K562 (cell line): ENCODE measurements at regions of chr6 and their contacts with region 1.

Region 1: GRCh38 chr6:26234421-26235296 is 130.3 kb upstream of the BTN3A2 start:
- DNase-seq: peak; percentile 71 to 93 (median 83)
- ATAC-seq: peak; percentile 89
- H3K4me3 ChIP-seq: peak overlapping the region; percentile 40
- H3K27ac ChIP-seq: peak overlapping the region; percentile 73
- H3K4me1 ChIP-seq: peaks cover 16 to 20% of the 10 kb centered on the region in 2 experiments; a peak in 4 of 5 replicates
- H3K27me3 ChIP-seq: no peaks in the 10 kb centered on the region
- CTCF ChIP-seq: no peak
- EP300 ChIP-seq: no peak; the same call in 1 of the 2 replicates
- POLR2A ChIP-seq: peak; percentile 99
- RAD21 ChIP-seq: no peak; a peak in 1 of 4 replicates

Region 2: DNA sequence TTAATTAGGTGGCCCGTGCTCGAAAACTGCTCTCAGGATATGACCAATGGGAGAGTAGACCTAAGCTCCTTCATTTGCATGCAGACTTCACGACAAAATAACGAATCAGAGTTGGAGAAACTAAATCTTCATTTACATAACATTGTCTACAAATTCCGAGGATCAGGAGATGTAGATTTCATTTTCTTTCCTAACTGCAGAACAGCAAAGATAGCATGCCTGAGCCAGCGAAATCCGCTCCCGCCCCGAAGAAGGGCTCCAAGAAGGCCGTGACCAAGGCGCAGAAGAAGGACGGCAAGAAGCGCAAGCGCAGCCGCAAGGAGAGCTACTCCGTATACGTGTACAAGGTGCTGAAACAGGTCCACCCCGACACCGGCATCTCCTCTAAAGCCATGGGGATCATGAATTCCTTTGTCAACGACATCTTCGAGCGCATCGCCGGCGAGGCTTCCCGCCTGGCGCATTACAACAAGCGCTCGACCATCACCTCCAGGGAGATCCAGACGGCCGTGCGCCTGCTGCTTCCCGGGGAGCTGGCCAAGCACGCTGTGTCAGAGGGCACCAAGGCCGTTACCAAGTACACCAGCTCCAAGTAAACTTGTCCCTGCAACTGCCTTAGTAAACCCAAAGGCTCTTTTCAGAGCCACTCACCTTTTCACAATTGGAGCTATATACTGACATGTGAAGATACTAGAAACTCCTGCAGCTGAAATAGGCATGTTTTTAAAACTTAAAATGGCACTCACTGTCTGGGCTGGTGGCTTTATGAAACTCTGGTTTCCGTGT is 50.9 kb before region 1 on chr6:
- CTCF ChIA-PET with region 1: no interaction called
- POLR2A ChIA-PET with region 1: interaction called, 11 read pairs
- in situ Hi-C with region 1: no loop called
- intact Hi-C with region 1: no loop called
- DNase-seq: no peak
- ATAC-seq: no peak
- H3K4me3 ChIP-seq: no peak overlapping the region
- H3K27ac ChIP-seq: no peak overlapping the region
- H3K4me1 ChIP-seq: peaks cover 0 to 18% of the 10 kb centered on the region in 2 experiments; a peak in 4 of 5 replicates
- H3K27me3 ChIP-seq: no peaks in the 10 kb centered on the region
- CTCF ChIP-seq: no peak
- EP300 ChIP-seq: no peak
- POLR2A ChIP-seq: no peak
- RAD21 ChIP-seq: no peak

Region 3: DNA sequence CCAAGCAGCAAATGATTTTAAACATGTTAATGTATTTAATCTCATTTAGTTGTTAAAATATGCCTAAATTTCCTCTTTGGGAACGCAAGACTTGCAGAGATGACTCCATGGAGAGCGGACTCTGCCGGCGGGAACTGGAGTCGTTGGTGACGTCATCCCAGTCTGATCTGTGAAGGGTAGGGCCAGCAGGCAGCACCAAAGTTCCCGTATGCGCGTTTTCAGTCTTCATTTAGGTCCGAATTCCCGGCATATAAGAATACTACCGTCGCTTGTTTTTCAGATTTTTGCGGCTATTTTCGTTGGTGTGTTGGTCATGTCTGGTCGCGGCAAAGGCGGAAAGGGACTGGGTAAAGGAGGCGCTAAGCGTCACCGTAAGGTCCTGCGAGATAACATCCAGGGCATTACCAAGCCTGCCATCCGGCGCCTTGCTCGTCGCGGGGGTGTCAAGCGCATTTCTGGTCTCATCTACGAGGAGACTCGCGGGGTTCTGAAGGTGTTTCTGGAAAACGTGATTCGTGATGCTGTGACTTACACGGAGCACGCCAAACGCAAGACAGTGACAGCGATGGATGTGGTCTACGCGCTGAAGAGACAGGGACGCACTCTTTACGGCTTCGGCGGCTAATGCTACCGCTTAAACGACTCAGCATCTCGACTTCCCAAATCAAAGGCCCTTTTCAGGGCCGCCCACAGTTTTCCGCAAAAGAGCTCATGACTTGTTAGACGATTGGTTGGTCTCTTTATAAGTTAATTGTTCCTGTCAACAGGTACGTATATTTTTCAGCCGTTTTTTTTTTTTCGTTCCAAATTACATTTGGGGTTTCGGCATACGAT is 30.1 kb before region 1 on chr6:
- CTCF ChIA-PET with region 1: no interaction called
- POLR2A ChIA-PET with region 1: interaction called, 47 read pairs
- in situ Hi-C with region 1: no loop called
- intact Hi-C with region 1: no loop called
- DNase-seq: peak; percentile 85 to 99 (median 92)
- ATAC-seq: peak; percentile 67
- H3K4me3 ChIP-seq: peak overlapping the region; percentile 57
- H3K27ac ChIP-seq: peak overlapping the region; percentile 99
- H3K4me1 ChIP-seq: peaks cover 9 to 21% of the 10 kb centered on the region in 2 experiments; a peak in 4 of 5 replicates
- H3K27me3 ChIP-seq: no peaks in the 10 kb centered on the region
- CTCF ChIP-seq: peak in 2 of 3 experiments; percentile 67 to 70; a peak in 5 of 6 replicates
- EP300 ChIP-seq: peak; percentile 95
- POLR2A ChIP-seq: peak; percentile 100
- RAD21 ChIP-seq: peak in 1 of 2 experiments; percentile 29; a peak in 2 of 4 replicates

Region 4: DNA sequence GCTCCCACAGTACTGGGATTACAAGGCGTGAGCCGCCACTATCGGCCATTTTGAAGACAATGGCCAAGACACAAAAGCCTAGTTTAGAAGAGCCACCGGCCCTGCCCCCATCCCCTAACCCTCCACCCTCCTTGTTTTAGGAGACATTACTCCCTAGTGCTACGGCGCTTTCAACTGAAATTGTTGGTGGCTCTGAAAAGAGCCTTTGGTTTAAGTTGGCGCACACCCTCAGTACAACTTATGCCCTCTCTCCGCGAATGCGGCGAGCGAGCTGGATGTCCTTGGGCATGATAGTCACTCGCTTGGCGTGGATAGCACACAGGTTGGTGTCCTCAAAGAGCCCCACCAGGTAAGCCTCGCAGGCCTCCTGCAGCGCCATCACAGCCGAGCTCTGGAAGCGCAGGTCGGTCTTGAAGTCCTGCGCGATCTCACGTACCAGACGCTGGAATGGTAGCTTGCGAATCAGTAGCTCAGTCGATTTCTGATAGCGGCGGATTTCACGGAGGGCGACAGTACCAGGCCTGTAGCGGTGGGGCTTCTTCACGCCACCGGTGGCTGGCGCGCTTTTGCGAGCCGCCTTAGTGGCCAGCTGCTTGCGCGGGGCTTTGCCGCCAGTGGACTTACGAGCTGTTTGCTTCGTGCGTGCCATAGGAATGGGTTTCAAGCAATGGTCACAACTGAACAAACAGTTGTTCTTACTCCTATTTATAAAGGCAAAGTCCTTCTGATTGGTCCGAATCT is 15.5 kb after region 1 on chr6:
- CTCF ChIA-PET with region 1: no interaction called
- POLR2A ChIA-PET with region 1: interaction called, 112 read pairs
- in situ Hi-C with region 1: no loop called
- intact Hi-C with region 1: no loop called
- DNase-seq: peak; percentile 39 to 86 (median 51)
- ATAC-seq: peak; percentile 73
- H3K4me3 ChIP-seq: peak overlapping the region; percentile 43
- H3K27ac ChIP-seq: peak overlapping the region; percentile 91
- H3K4me1 ChIP-seq: peaks cover 5 to 12% of the 10 kb centered on the region in 2 experiments; a peak in 3 of 5 replicates
- H3K27me3 ChIP-seq: no peaks in the 10 kb centered on the region
- CTCF ChIP-seq: peak; percentile 27 to 63 (median 42); a peak in 5 of 6 replicates
- EP300 ChIP-seq: 0 out of 2 replicates have a peak, but pooled peaks have one; percentile 28
- POLR2A ChIP-seq: peak; percentile 95
- RAD21 ChIP-seq: no peak; a peak in 2 of 4 replicates

Region 5: DNA sequence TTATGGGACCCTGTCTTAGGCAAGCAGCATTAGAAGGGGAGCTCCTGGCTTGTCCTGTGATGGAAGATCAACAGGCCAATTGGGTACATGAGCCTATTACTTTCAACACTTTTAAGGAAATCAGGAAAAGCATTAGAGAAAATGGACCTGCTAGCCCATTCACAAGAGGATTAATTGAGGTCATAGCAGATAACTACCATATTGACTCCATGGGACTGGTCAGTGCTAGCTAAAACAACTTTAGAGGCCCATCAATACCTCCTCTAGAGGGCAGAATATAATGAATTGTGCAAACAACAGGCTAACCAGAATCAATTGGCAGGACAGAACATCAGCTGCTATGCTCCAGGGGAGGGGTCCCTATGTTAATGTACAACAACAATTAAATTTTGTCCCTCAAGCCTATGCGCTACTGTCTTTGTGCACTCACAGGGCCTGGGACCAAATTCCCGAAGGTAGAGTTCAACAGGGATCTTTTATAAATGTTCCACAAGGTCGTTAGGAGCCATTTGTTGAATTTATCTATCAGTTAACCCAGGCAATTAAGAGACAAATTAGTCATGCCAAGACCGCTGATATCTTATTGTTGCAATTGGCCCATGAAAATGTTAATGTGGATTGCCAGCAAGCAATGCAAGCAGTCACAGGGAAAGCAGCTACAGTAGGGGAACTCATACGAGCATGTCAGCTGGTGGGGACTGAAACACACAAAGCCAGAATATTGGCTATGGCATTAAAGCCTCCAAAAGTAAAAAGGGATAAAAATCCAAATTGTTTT is 23.7 kb after region 1 on chr6:
- CTCF ChIA-PET with region 1: no interaction called
- POLR2A ChIA-PET with region 1: interaction called, 14 read pairs
- in situ Hi-C with region 1: no loop called
- intact Hi-C with region 1: no loop called
- DNase-seq: peak in 3 of 4 experiments; percentile 48 to 51 (median 49)
- ATAC-seq: peak; percentile 77
- H3K4me3 ChIP-seq: no peak overlapping the region
- H3K27ac ChIP-seq: no peak overlapping the region
- H3K4me1 ChIP-seq: peaks cover 3 to 11% of the 10 kb centered on the region in 2 experiments; a peak in 3 of 5 replicates
- H3K27me3 ChIP-seq: no peaks in the 10 kb centered on the region
- CTCF ChIP-seq: peak; percentile 41 to 66 (median 56); a peak in 5 of 6 replicates
- EP300 ChIP-seq: no peak
- POLR2A ChIP-seq: no peak
- RAD21 ChIP-seq: peak; percentile 18 to 57; a peak in 2 of 4 replicates

Region 6: GRCh38 chr6:26550250-26550993 is 315.8 kb after region 1 on chr6:
- CTCF ChIA-PET with region 1: no interaction called
- POLR2A ChIA-PET with region 1: no interaction called
- in situ Hi-C with region 1: no loop called
- intact Hi-C with region 1: no loop called
- DNase-seq: peak; percentile 49 to 60 (median 56)
- ATAC-seq: peak; percentile 24; the same call in 2 of the 3 replicates
- H3K4me3 ChIP-seq: peak overlapping the region; percentile 26
- H3K27ac ChIP-seq: no peak overlapping the region
- H3K4me1 ChIP-seq: peaks cover 5 to 9% of the 10 kb centered on the region in 2 experiments; a peak in 4 of 5 replicates
- H3K27me3 ChIP-seq: no peaks in the 10 kb centered on the region
- CTCF ChIP-seq: no peak
- EP300 ChIP-seq: no peak
- POLR2A ChIP-seq: no peak
- RAD21 ChIP-seq: no peak